ENCODE measurements at regions of chr6 and their contacts with region 1.

Region 1: GRCh38 chr6:16770701-16771569 is 9.7 kb upstream of the ATXN1 start:
- DNase-seq: peak; percentile 80 to 91 (median 84)
- ATAC-seq: peak; percentile 78 to 91 (median 85)
- H3K4me3 ChIP-seq: no peak overlapping the region
- H3K27ac ChIP-seq: peak overlapping the region in 4 of 12 donors; percentile 11 to 63 (median 28)
- H3K4me1 ChIP-seq: peaks cover 0 to 45% (median 31%) of the 10 kb centered on the region in 12 donors
- H3K27me3 ChIP-seq: no peaks in the 10 kb centered on the region
- CTCF ChIP-seq: peak; percentile 88 to 99 (median 93)
- POLR2A ChIP-seq: no peak

Region 2: DNA sequence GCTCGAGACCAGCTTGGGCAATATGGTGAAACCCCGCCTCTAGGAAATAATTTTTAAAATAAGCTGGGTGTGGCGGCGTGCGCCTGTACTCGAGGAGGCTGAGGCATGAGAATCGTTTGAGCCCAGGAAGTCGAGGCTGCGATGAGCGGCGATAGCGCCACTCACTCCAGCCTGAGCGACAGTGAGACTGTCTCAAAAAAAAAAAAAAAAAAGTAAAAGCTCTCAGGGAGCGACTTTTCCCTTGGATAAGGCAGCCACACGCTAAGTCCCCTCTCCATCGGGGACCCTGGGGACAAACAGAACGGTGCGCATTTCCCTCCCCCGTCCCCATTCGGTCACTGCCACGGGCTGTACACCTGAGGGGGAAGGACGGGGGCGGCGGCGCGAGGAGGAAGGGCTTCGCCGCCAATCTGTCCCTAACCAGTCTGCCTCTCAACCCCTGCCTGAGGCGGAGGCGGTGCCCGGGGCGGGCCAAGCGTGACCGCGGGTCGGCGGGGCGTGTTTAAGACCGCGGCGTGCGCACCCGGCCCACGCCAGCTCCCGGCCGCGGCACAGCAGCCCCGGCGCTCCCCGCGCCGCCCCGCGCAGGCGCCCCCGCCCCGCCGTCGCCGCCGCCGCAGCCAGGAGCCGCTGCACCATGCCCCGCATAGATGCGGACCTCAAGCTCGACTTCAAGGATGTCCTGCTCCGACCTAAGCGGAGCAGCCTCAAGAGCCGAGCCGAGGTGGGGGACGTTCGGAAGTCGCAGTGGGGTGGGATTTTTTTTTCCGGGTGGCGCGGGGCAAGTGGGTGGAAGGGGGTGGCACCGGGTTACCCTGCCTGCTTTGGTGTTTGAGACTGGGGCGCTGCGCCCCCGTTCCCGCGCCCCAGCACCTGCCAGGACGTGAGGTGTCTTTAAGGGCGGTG is 532.6 kb before region 1 on chr6 and contains the start of gene GMPR:
- intact Hi-C with region 1: loop called in 1 of 10 experiments (anchors 5 kb)
- DNase-seq: peak; percentile 82 to 91 (median 88)
- ATAC-seq: peak; percentile 53 to 84 (median 80)
- H3K4me3 ChIP-seq: peak within 1 kb of the TSS; percentile 50 to 88 (median 76)
- H3K27ac ChIP-seq: peak within 1 kb of the TSS; percentile 59 to 92 (median 86)
- H3K4me1 ChIP-seq: peaks cover 0 to 62% (median 28%) of the 10 kb centered on the region in 12 donors
- H3K27me3 ChIP-seq: no peaks in the 10 kb centered on the region
- CTCF ChIP-seq: peak in 4 of 12 donors; percentile 12 to 27 (median 20)
- POLR2A ChIP-seq: peak in 1 of 2 donors; percentile 58
- total RNA-seq, gene GMPR: 67.8 to 160 (median 115) TPM

Measured in heart left ventricle (tissue), 16 donors.